CD8-positive, alpha-beta T cell (primary cell): ENCODE measurements at regions of chr1 and their contacts with region 1.

Region 1: DNA sequence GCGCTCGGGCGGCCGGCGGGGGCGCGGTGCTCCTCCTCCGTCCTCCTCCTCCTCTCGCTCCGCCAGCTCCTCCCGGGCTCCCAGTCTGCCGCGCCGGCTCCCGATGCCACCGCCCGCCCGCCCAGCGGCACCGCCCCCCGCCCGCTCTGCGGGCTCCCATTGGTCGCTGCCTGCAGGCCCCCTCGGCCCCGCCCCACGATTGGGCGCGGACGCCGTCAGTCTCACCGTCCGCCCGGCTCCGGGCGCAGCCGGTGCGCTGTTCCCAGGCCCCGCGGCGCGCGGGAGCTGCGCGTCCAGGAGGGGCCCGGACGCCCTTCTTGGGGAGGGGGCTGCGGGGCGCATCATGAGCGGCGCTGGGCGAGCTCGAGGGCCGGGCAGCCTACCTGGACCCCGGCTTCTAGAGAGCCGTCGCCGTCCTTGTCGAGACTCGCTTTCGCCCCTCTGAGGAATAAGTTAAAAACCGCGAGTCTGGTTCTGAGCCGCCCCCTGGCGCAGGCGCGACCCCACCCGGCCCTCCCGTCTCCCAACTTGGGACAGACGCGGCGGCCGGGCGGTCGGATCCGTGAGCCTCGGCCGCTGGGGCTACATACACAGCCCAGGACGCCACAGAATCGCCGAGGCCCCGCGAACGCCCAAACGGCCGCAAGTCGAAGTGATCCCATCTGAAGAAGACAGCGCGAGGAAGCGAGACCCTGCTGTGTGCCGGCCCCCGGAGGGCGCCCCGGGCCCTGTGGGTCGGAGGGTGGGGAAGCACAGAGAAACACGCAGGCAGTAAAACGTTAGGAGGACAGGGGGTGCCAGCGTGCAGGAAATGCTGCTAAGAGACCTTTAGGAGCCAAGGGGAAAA is at the start of gene SIPA1L2:
- DNase-seq: peak; percentile 67 to 92 (median 79)
- ATAC-seq: peak; percentile 94
- H3K4me3 ChIP-seq: peak within 1 kb of the TSS; percentile 46 to 51
- H3K4me3 Mint-ChIP-seq: peak within 1 kb of the TSS; percentile 89
- H3K27ac ChIP-seq: no peak within 1 kb of the TSS
- H3K27ac Mint-ChIP-seq: no peak within 1 kb of the TSS
- H3K4me1 ChIP-seq: peaks cover 9% of the 10 kb centered on the region
- H3K4me1 Mint-ChIP-seq: peaks cover 22% of the 10 kb centered on the region
- H3K27me3 ChIP-seq: peaks cover 5% of the 10 kb centered on the region in 2 experiments
- H3K27me3 Mint-ChIP-seq: peaks cover 31% of the 10 kb centered on the region
- CTCF ChIP-seq: no peak
- total RNA-seq, gene SIPA1L2: 2.1 to 2.2 TPM

Region 2: GRCh38 chr1:231337472-231338269 is 1292.6 kb before region 1 on chr1 and contains the start of gene EXOC8:
- CTCF ChIA-PET with region 1: no interaction called
- POLR2A ChIA-PET with region 1: no interaction called
- intact Hi-C with region 1: loop called in 1 of 2 experiments (anchors 5 kb)
- DNase-seq: peak; percentile 95 to 99 (median 98)
- ATAC-seq: peak; percentile 83
- H3K4me3 ChIP-seq: peak within 1 kb of the TSS; percentile 95 to 98
- H3K4me3 Mint-ChIP-seq: peak within 1 kb of the TSS; percentile 97
- H3K27ac ChIP-seq: peak within 1 kb of the TSS; percentile 97 to 98
- H3K27ac Mint-ChIP-seq: peak within 1 kb of the TSS; percentile 99
- H3K4me1 ChIP-seq: peaks cover 55% of the 10 kb centered on the region
- H3K4me1 Mint-ChIP-seq: peaks cover 64% of the 10 kb centered on the region
- H3K27me3 ChIP-seq: no peaks in the 10 kb centered on the region
- H3K27me3 Mint-ChIP-seq: no peaks in the 10 kb centered on the region
- CTCF ChIP-seq: no peak
- total RNA-seq, gene EXOC8: 28.8 to 28.9 TPM

Region 3: DNA sequence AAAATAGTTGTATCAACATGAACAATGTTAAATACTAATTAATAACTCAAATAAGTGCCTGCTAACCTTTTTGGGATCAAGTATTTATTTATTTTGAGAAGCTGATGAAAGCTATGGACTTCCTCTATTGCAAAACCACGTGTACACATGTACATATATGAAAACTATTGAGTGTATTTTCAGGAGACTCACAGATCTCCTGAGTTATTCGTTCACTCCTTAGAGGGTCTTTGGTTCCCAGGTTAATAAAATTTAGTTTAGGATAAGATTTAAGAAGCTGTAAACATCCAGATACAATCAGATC is 873.2 kb before region 1 on chr1:
- CTCF ChIA-PET with region 1: interaction called, 5 read pairs
- POLR2A ChIA-PET with region 1: no interaction called
- intact Hi-C with region 1: loop called (anchors 5 kb)
- DNase-seq: no peak
- ATAC-seq: no peak
- H3K4me3 ChIP-seq: no peak overlapping the region
- H3K4me3 Mint-ChIP-seq: peak overlapping the region; percentile 9
- H3K27ac ChIP-seq: no peak overlapping the region
- H3K27ac Mint-ChIP-seq: no peak overlapping the region
- H3K4me1 ChIP-seq: no peaks in the 10 kb centered on the region
- H3K4me1 Mint-ChIP-seq: no peaks in the 10 kb centered on the region
- H3K27me3 ChIP-seq: no peaks in the 10 kb centered on the region
- H3K27me3 Mint-ChIP-seq: no peaks in the 10 kb centered on the region
- CTCF ChIP-seq: peak; percentile 64

Region 4: GRCh38 chr1:231866392-231867331 is 763.6 kb before region 1 on chr1:
- CTCF ChIA-PET with region 1: interaction called, 24 read pairs
- POLR2A ChIA-PET with region 1: no interaction called
- intact Hi-C with region 1: loop called (anchors 1 to 2 kb)
- DNase-seq: peak; percentile 22 to 75 (median 61)
- ATAC-seq: no peak
- H3K4me3 ChIP-seq: no peak overlapping the region
- H3K4me3 Mint-ChIP-seq: no peak overlapping the region
- H3K27ac ChIP-seq: no peak overlapping the region
- H3K27ac Mint-ChIP-seq: no peak overlapping the region
- H3K4me1 ChIP-seq: peaks cover 2% of the 10 kb centered on the region
- H3K4me1 Mint-ChIP-seq: peaks cover 44% of the 10 kb centered on the region
- H3K27me3 ChIP-seq: no peaks in the 10 kb centered on the region
- H3K27me3 Mint-ChIP-seq: no peaks in the 10 kb centered on the region
- CTCF ChIP-seq: peak; percentile 94

Region 5: GRCh38 chr1:232393010-232393409 is 237.3 kb before region 1 on chr1:
- CTCF ChIA-PET with region 1: no interaction called
- POLR2A ChIA-PET with region 1: no interaction called
- intact Hi-C with region 1: no loop called
- DNase-seq: no peak
- ATAC-seq: no peak
- H3K4me3 ChIP-seq: no peak overlapping the region
- H3K4me3 Mint-ChIP-seq: no peak overlapping the region
- H3K27ac ChIP-seq: no peak overlapping the region
- H3K27ac Mint-ChIP-seq: no peak overlapping the region
- H3K4me1 ChIP-seq: no peaks in the 10 kb centered on the region
- H3K4me1 Mint-ChIP-seq: no peaks in the 10 kb centered on the region
- H3K27me3 ChIP-seq: no peaks in the 10 kb centered on the region
- H3K27me3 Mint-ChIP-seq: no peaks in the 10 kb centered on the region
- CTCF ChIP-seq: no peak

Region 6: DNA sequence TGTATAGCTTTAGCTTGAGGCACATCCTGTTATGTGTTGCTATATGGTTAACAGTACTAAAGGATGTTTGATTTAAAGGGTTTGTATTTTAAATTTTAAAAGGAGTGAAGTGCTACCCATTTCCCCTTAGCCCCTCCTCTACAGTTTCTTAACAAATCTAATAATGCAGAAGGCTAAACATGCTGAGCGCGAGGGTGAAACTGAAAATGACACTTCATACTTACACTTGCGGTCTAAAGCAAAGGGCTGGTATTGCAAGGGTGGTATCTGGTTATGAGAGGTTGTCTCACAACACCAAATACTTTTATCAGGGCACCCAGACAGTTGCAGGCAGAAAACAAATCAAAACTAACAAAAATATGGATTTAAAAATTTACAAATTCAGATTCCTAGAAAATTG is 172.7 kb before region 1 on chr1:
- CTCF ChIA-PET with region 1: no interaction called
- POLR2A ChIA-PET with region 1: no interaction called
- intact Hi-C with region 1: loop called in 1 of 2 experiments (anchors 10 kb)
- DNase-seq: peak in 4 of 9 experiments; percentile 15 to 52 (median 40)
- ATAC-seq: peak; percentile 77
- H3K4me3 ChIP-seq: no peak overlapping the region
- H3K4me3 Mint-ChIP-seq: no peak overlapping the region
- H3K27ac ChIP-seq: peak overlapping the region in 1 of 2 experiments; percentile 15
- H3K27ac Mint-ChIP-seq: no peak overlapping the region
- H3K4me1 ChIP-seq: peaks cover 9% of the 10 kb centered on the region
- H3K4me1 Mint-ChIP-seq: peaks cover 16% of the 10 kb centered on the region
- H3K27me3 ChIP-seq: no peaks in the 10 kb centered on the region
- H3K27me3 Mint-ChIP-seq: no peaks in the 10 kb centered on the region
- CTCF ChIP-seq: no peak

Region 7: DNA sequence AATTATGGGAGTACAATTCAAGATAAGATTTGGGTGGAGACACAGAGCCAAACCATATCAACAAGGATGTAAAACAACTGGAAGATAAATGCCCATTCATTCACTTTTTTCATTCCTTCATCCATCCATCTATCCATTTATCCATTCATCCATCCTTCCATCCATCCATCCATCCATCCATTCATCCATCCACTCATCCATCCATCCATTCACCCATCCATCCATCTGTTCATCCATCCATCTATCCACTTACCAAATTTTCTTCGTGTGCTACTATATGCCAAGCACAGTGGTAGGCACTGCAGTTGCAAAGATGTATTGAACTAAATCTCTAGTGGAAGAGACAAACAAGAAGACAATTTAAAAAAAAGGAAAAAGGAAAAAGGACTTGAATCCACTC is 13.9 kb after region 1 on chr1:
- CTCF ChIA-PET with region 1: no interaction called
- POLR2A ChIA-PET with region 1: no interaction called
- intact Hi-C with region 1: no loop called
- DNase-seq: no peak
- ATAC-seq: no peak
- H3K4me3 ChIP-seq: no peak overlapping the region
- H3K4me3 Mint-ChIP-seq: no peak overlapping the region
- H3K27ac ChIP-seq: no peak overlapping the region
- H3K27ac Mint-ChIP-seq: no peak overlapping the region
- H3K4me1 ChIP-seq: no peaks in the 10 kb centered on the region
- H3K4me1 Mint-ChIP-seq: no peaks in the 10 kb centered on the region
- H3K27me3 ChIP-seq: no peaks in the 10 kb centered on the region
- H3K27me3 Mint-ChIP-seq: no peaks in the 10 kb centered on the region
- CTCF ChIP-seq: no peak

Region 8: GRCh38 chr1:232805269-232806185 is 175.3 kb after region 1 on chr1 and contains the start of gene MAP10:
- CTCF ChIA-PET with region 1: no interaction called
- POLR2A ChIA-PET with region 1: no interaction called
- intact Hi-C with region 1: loop called in 1 of 2 experiments (anchors 2 kb)
- DNase-seq: peak; percentile 48 to 85 (median 72)
- ATAC-seq: peak; percentile 72
- H3K4me3 ChIP-seq: peak within 1 kb of the TSS; percentile 72 to 96
- H3K4me3 Mint-ChIP-seq: peak within 1 kb of the TSS; percentile 82
- H3K27ac ChIP-seq: peak within 1 kb of the TSS; percentile 49 to 66
- H3K27ac Mint-ChIP-seq: peak within 1 kb of the TSS; percentile 73
- H3K4me1 ChIP-seq: peaks cover 8% of the 10 kb centered on the region
- H3K4me1 Mint-ChIP-seq: peaks cover 17% of the 10 kb centered on the region
- H3K27me3 ChIP-seq: no peaks in the 10 kb centered on the region
- H3K27me3 Mint-ChIP-seq: no peaks in the 10 kb centered on the region
- CTCF ChIP-seq: no peak
- total RNA-seq, gene MAP10: 0.89 to 0.98 TPM

Region 9: DNA sequence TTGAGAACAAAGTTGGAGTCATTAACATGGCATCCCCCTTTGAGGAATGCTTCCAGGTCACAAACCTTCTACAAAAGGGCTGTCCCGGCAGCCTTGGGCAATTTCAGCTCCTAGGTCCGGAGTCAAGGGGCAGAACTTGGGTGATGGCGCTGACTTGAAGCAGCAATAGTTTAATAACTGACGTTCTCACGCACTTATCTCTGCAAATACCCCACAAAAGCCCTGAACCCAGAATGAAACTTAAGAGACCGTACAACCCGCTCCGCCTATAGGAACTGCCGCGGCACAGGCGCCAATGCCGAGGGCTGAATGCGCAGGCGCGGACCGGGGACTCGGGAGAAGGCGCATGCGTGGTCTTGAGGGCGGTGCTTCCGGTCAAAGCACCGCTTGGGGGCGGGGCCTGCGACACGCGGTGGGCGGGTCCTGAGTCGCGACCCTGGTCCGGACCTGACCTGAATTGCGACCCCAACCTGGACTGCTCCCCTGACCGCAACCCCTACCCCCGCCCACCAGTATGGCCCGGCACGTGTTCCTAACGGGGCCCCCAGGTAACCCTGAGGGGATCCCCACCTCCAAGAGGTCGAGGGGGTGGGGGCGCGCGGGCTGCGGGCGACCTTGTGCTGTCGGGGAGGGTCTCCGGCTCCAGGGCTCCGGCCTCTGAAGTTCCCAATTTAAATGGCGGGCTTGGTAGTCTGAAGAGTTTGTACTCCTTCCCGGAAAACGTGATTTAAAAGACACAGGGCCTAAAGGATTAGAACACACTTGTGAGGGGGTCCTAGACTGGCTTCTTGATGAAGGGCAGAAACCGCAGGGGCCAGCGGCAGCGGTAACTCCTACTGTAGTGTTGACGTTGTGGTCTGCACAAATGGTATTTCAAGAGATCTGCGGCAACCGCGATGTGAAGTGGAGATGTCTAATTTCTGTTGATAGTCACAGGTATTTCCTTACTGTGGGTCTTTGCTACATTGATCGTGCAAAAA is 320.2 kb after region 1 on chr1 and contains the start of gene NTPCR:
- CTCF ChIA-PET with region 1: no interaction called
- POLR2A ChIA-PET with region 1: no interaction called
- intact Hi-C with region 1: loop called (anchors 2 to 5 kb)
- DNase-seq: peak; percentile 87 to 98 (median 95)
- ATAC-seq: peak; percentile 83
- H3K4me3 ChIP-seq: peak within 1 kb of the TSS; percentile 83 to 90
- H3K4me3 Mint-ChIP-seq: peak within 1 kb of the TSS; percentile 96
- H3K27ac ChIP-seq: peak within 1 kb of the TSS; percentile 56 to 64
- H3K27ac Mint-ChIP-seq: peak within 1 kb of the TSS; percentile 94
- H3K4me1 ChIP-seq: peaks cover 28% of the 10 kb centered on the region
- H3K4me1 Mint-ChIP-seq: peaks cover 44% of the 10 kb centered on the region
- H3K27me3 ChIP-seq: no peaks in the 10 kb centered on the region
- H3K27me3 Mint-ChIP-seq: no peaks in the 10 kb centered on the region
- CTCF ChIP-seq: no peak
- total RNA-seq, gene NTPCR: 3.4 to 3.9 TPM